A549 (cell line): ENCODE measurements at regions of chr17 and their contacts with region 1.

Region 1: GRCh38 chr17:42248351-42249179 is 27.6 kb downstream of the STAT5B start:
- DNase-seq: no peak
- ATAC-seq: no peak
- H3K4me3 ChIP-seq: no peak overlapping the region
- H3K27ac ChIP-seq: no peak overlapping the region
- H3K4me1 ChIP-seq: peaks cover 39% of the 10 kb centered on the region
- CTCF ChIP-seq: no peak
- EP300 ChIP-seq: no peak
- POLR2A ChIP-seq: no peak
- RAD21 ChIP-seq: no peak

Region 2: DNA sequence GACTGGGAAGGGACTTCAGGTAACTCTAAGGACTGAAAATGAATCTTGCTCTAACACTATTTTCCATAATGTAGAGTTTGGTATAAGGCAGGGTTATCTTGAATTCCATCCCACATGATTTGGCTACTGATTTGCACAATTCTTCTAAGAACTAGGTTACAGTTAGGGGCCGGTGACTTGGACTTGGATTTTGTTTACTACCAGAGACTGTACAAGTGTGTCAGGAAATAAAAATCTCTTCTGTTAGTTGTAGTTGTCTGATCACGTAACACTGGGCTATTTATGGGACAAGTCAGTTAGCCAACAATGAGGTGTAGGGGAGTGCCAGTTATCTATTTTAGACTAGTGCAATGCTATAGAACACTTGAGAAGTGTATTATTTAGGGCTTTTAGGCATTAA is 14.6 kb before region 1 on chr17:
- CTCF ChIA-PET with region 1: interaction called, 13 read pairs
- POLR2A ChIA-PET with region 1: no interaction called
- DNase-seq: no peak
- ATAC-seq: no peak
- H3K4me3 ChIP-seq: no peak overlapping the region
- H3K27ac ChIP-seq: no peak overlapping the region
- H3K4me1 ChIP-seq: peaks cover 13% of the 10 kb centered on the region; the same call in 2 of the 3 replicates
- CTCF ChIP-seq: no peak
- EP300 ChIP-seq: no peak
- POLR2A ChIP-seq: no peak
- RAD21 ChIP-seq: no peak